Kidney (tissue), 22 donors: ENCODE measurements at regions of chr7 and their contacts with region 1.

Region 1: DNA sequence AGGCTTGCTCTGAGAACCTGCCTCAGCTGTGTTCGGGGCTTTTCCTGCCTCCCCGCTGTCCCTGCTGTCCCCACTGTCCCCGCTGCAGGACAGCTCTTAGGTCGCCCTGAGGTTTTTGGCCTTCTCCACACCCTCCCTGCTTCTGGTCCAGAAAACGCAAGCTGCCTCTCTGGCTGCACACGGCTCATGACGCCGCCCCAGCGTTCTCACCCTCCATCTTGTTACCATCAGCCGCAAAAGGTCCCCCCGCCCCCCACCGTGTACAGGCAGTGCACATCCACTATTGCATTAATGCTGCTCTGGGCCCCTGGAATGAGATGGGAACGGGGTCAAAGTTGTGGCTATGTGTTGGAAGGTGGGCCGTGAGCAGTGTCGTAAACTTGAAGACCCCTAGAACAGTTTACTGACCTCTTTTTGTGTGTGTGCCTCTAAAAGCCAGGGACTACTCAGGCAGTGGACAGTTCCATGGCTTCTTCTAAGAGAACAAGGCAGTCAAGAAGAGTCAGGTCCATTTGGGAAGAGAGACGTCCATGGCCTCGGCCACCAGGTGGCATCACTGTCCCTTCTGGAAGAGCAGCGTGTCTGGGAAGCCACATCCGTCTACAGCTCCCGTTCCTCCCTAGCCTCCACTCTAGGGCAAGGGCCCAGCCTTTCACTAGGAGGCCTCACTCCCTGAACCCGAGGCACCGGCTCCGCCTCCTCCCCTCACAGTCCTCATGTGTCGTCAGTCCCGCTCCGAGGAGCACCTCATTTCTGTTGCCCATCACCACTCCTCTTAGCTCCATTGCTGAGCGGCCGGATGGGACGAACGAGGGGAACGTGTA is 38.5 kb upstream of the MKRN1 start:
- DNase-seq: peak; percentile 91 to 95 (median 93)
- H3K4me3 ChIP-seq: no peak overlapping the region
- H3K27ac ChIP-seq: no peak overlapping the region
- H3K4me1 ChIP-seq: peaks cover 0 to 2% (median 0%) of the 10 kb centered on the region in 3 donors
- H3K27me3 ChIP-seq: no peaks in the 10 kb centered on the region
- CTCF ChIP-seq: peak; percentile 96

Region 2: DNA sequence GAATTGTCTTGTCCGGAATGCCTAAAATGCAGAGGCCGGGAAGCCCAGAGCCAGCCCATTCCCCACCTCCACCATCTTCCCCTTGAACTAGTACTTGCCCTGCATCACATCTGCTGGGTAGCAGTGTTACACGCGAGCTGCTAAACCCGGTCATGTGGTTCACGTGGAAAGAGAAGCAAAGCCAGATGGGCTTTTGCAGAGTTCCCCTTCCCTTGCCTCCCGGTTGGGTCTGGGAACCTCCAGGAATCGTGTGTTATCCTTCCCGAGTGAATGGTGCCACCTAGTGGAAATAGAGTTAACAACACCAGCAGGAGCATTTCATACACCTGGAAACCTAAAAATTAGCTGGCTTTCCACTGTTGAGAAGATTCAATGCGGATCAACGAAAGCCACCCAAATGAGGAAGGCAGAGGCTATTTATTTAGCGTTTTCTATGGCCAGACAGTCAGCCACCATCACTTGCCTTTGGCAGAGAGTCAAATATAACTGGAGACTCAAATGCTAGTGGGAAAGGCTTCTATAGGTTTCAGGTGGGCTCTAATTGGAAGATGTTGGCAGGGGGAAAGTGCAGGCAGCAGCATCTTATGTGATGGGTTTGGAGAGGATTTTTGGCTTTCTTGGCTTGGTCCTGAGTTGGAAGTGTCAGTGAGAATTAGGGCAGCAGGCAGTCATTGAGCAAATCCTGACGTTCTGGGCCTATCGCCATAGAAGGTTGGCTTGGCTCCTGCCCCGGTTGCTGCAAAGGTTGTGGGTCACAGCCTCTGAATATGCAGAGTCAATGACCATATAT is 135.8 kb after region 1 on chr7:
- intact Hi-C with region 1: loop called (anchors 5 kb)
- DNase-seq: peak in 4 of 5 donors; percentile 80 to 95 (median 85)
- H3K4me3 ChIP-seq: no peak overlapping the region
- H3K27ac ChIP-seq: no peak overlapping the region
- H3K4me1 ChIP-seq: peaks cover 2 to 8% (median 5%) of the 10 kb centered on the region in 3 donors
- H3K27me3 ChIP-seq: no peaks in the 10 kb centered on the region
- CTCF ChIP-seq: peak; percentile 90

Region 3: DNA sequence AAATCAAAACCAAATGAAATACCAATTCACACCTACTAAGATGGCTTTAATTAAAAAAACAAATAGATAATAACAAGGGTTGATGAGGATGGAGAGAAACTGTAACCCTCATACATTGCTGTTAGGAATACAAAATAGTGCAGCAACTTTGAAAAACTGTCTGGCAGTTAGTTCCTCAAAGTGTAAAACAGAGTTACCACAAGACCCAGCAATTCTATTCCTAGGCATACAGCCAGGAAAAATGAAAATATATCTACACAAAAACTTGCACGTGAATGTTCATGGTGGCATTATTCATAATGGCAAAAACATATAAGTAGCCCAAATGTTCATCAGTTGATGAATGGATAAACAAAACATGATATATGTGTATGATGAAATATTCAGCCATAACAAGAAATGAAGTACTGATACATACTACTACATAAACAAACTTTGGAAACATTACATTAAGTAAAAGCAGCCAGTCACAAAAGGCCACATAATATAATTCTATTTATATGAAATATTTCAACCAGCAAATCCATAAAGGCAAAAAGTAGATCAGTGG is 323.5 kb after region 1 on chr7:
- intact Hi-C with region 1: no loop called
- DNase-seq: no peak
- H3K4me3 ChIP-seq: no peak overlapping the region
- H3K27ac ChIP-seq: no peak overlapping the region
- H3K4me1 ChIP-seq: no peaks in the 10 kb centered on the region
- H3K27me3 ChIP-seq: no peaks in the 10 kb centered on the region
- CTCF ChIP-seq: no peak